ENCODE measurements at regions of chr4 and their contacts with region 1.

Region 1: GRCh38 chr4:8162625-8163024 is 4.0 kb upstream of the ABLIM2 start:
- DNase-seq: peak; percentile 91
- H3K4me3 ChIP-seq: peak overlapping the region; percentile 33
- H3K27ac ChIP-seq: peak overlapping the region; percentile 70
- H3K4me1 ChIP-seq: peaks cover 42% of the 10 kb centered on the region
- CTCF ChIP-seq: no peak

Region 2: GRCh38 chr4:8131210-8131609 is 31.4 kb before region 1 on chr4:
- CTCF ChIA-PET with region 1: no interaction called
- POLR2A ChIA-PET with region 1: interaction called, 5 read pairs
- intact Hi-C with region 1: loop called (anchors 2 kb)
- DNase-seq: peak; percentile 74
- H3K4me3 ChIP-seq: no peak overlapping the region
- H3K27ac ChIP-seq: peak overlapping the region; percentile 67
- H3K4me1 ChIP-seq: peaks cover 21% of the 10 kb centered on the region
- CTCF ChIP-seq: peak; percentile 39; the same call in 1 of the 2 replicates

Region 3: DNA sequence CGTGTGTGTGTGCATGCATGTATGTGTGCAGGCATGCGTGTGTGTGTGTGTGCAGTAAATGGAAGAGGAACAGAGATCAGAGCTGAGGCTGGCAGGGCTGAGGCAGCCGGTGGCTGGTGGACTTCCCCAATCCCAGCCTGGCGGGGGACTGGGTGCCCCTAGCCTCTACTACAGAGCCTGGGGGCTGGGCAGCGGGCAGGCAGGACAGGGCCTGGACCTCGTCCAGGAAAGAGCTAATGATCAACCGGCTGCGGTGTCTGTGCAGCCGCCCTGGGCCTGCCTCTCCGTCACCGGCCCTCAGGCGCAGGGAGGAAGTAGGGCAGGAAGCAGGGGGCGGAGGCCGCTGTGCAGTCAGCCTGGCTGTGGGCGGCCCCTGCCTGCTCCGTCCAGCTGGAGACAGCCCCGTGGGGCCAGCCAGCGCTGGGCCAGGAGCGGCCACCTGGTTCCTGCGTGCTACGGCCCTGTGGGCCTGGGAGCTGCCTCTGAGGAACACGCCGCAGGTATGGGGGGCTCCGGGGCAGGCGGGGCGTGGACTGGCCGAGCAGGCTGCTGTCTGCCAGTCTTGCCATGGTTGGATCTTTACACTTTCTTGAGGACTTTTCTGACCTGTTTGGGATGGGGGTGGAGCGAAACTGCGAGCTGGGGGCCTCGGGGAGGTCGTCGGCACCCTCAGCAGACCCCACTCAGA is 36.4 kb after region 1 on chr4 and contains the start of gene SH3TC1:
- CTCF ChIA-PET with region 1: no interaction called
- POLR2A ChIA-PET with region 1: interaction called, 5 read pairs
- intact Hi-C with region 1: loop called (anchors 2 kb)
- DNase-seq: peak; percentile 82
- H3K4me3 ChIP-seq: peak within 1 kb of the TSS; percentile 67
- H3K27ac ChIP-seq: peak within 1 kb of the TSS; percentile 51
- H3K4me1 ChIP-seq: peaks cover 53% of the 10 kb centered on the region
- CTCF ChIP-seq: no peak
- total RNA-seq, gene SH3TC1: 15.3 and 17.5 TPM in 2 replicates

Region 4: GRCh38 chr4:8303485-8304301 is 141.1 kb after region 1 on chr4:
- CTCF ChIA-PET with region 1: no interaction called
- POLR2A ChIA-PET with region 1: no interaction called
- intact Hi-C with region 1: no loop called
- DNase-seq: no peak
- H3K4me3 ChIP-seq: no peak overlapping the region
- H3K27ac ChIP-seq: no peak overlapping the region
- H3K4me1 ChIP-seq: no peaks in the 10 kb centered on the region
- CTCF ChIP-seq: no peak

Measured in OCI-LY7 (cell line).